ENCODE measurements at regions of chr14 and their contacts with region 1.

Region 1: DNA sequence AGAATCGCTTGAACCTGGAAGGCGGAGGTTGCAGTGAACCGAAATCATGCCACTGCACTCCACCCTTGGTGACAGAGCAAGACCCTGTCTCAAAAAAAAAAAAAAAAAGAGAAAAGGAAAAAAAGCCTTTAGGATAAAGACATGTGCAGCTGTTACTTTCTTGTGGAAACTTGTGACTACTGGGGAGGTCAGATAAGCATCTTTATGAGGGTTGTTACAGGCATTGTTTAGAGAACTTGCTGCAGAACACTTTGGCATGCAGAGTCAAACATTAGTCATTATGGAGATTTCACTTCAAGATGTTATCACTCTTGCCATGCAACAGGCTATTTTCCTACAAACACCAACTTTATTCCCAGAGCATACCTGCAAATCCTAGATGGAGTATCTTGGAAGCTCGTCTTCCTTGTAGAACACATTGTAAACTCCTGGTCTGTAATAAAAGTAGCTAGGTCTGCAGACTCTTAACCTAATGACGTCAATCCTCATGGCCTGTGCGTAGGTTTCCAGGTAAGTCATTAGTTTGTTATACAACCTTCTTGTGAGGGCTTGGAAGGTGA is 36.2 kb upstream of the WDR89 start:
- DNase-seq: no peak
- H3K4me3 ChIP-seq: no peak overlapping the region
- H3K27ac ChIP-seq: no peak overlapping the region
- H3K27me3 ChIP-seq: no peaks in the 10 kb centered on the region
- CTCF ChIP-seq: no peak

Region 2: GRCh38 chr14:63641473-63642228 is 36.2 kb before region 1 on chr14 and contains the start of gene WDR89:
- CTCF ChIA-PET with region 1: no interaction called
- POLR2A ChIA-PET with region 1: interaction called, 10 read pairs
- DNase-seq: peak; percentile 99
- H3K4me3 ChIP-seq: peak within 1 kb of the TSS; percentile 92
- H3K27ac ChIP-seq: peak within 1 kb of the TSS; percentile 99
- H3K27me3 ChIP-seq: no peaks in the 10 kb centered on the region
- CTCF ChIP-seq: peak; percentile 75
- polyA plus RNA-seq, gene WDR89: 6.1 and 9.4 TPM in 2 replicates